ENCODE measurements at regions of chr1 and their contacts with region 1.

Region 1: GRCh38 chr1:200979574-200980451 is 43.7 kb downstream of the KIF21B start:
- DNase-seq: peak; percentile 90
- ATAC-seq: peak; percentile 97
- H3K4me3 Mint-ChIP-seq: no peak overlapping the region
- H3K27ac Mint-ChIP-seq: no peak overlapping the region
- H3K4me1 Mint-ChIP-seq: no peaks in the 10 kb centered on the region
- H3K27me3 Mint-ChIP-seq: no peaks in the 10 kb centered on the region; the same call in 1 of the 2 replicates
- CTCF ChIP-seq: peak; percentile 87

Region 2: GRCh38 chr1:200866521-200866920 is 113.3 kb before region 1 on chr1:
- CTCF ChIA-PET with region 1: no interaction called
- POLR2A ChIA-PET with region 1: no interaction called
- DNase-seq: no peak
- ATAC-seq: peak; percentile 22; the same call in 1 of the 2 replicates
- H3K4me3 Mint-ChIP-seq: no peak overlapping the region
- H3K27ac Mint-ChIP-seq: no peak overlapping the region
- H3K4me1 Mint-ChIP-seq: peaks cover 4% of the 10 kb centered on the region; the same call in 1 of the 2 replicates
- H3K27me3 Mint-ChIP-seq: peaks cover 5% of the 10 kb centered on the region
- CTCF ChIP-seq: no peak

Region 3: DNA sequence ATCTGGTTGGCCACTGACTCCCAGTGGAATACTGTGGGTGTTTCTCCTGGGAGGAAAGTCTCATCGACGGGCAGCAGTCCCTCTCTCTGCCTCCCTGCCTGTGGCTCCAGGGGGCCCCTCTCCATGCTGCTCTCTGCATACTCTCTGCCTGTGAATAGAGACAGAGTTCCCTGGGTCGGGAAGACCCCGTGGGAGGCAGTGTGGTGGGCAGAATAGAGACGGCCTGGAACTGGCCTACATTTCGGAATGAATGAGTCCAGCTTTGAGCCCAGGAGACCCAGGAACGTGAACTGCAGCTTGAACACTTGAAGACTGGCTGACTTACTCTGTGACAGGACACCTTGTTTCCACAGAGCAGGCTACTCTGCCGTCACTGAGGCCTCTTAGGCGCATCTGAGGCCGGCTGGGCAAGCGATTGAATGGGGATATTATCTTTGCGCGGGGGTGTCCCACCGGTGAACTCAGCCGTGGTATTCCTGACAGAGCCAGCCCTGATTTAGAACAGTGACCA is 20.3 kb before region 1 on chr1:
- CTCF ChIA-PET with region 1: interaction called, 12 read pairs
- POLR2A ChIA-PET with region 1: no interaction called
- DNase-seq: no peak
- ATAC-seq: peak; percentile 88
- H3K4me3 Mint-ChIP-seq: no peak overlapping the region
- H3K27ac Mint-ChIP-seq: no peak overlapping the region
- H3K4me1 Mint-ChIP-seq: peaks cover 6% of the 10 kb centered on the region; the same call in 1 of the 2 replicates
- H3K27me3 Mint-ChIP-seq: peaks cover 5% of the 10 kb centered on the region; the same call in 1 of the 2 replicates
- CTCF ChIP-seq: no peak

Region 4: GRCh38 chr1:201009962-201010645 is 30.3 kb after region 1 on chr1:
- CTCF ChIA-PET with region 1: interaction called, 218 read pairs
- POLR2A ChIA-PET with region 1: no interaction called
- DNase-seq: peak; percentile 49
- ATAC-seq: peak; percentile 36
- H3K4me3 Mint-ChIP-seq: no peak overlapping the region
- H3K27ac Mint-ChIP-seq: no peak overlapping the region
- H3K4me1 Mint-ChIP-seq: peaks cover 16% of the 10 kb centered on the region
- H3K27me3 Mint-ChIP-seq: no peaks in the 10 kb centered on the region
- CTCF ChIP-seq: no peak

Region 5: GRCh38 chr1:201042779-201043461 is 63.1 kb after region 1 on chr1:
- CTCF ChIA-PET with region 1: interaction called, 153 read pairs
- POLR2A ChIA-PET with region 1: no interaction called
- DNase-seq: peak; percentile 70
- ATAC-seq: peak; percentile 87
- H3K4me3 Mint-ChIP-seq: no peak overlapping the region
- H3K27ac Mint-ChIP-seq: no peak overlapping the region
- H3K4me1 Mint-ChIP-seq: no peaks in the 10 kb centered on the region
- H3K27me3 Mint-ChIP-seq: no peaks in the 10 kb centered on the region; the same call in 1 of the 2 replicates
- CTCF ChIP-seq: peak; percentile 83

Region 6: GRCh38 chr1:201096035-201096434 is 116.2 kb after region 1 on chr1:
- CTCF ChIA-PET with region 1: interaction called, 12 read pairs
- POLR2A ChIA-PET with region 1: no interaction called
- DNase-seq: no peak
- ATAC-seq: no peak
- H3K4me3 Mint-ChIP-seq: no peak overlapping the region
- H3K27ac Mint-ChIP-seq: no peak overlapping the region
- H3K4me1 Mint-ChIP-seq: no peaks in the 10 kb centered on the region
- H3K27me3 Mint-ChIP-seq: no peaks in the 10 kb centered on the region
- CTCF ChIP-seq: no peak